Caco-2 (cell line): ENCODE measurements at regions of chr11 and their contacts with region 1.

Region 1: DNA sequence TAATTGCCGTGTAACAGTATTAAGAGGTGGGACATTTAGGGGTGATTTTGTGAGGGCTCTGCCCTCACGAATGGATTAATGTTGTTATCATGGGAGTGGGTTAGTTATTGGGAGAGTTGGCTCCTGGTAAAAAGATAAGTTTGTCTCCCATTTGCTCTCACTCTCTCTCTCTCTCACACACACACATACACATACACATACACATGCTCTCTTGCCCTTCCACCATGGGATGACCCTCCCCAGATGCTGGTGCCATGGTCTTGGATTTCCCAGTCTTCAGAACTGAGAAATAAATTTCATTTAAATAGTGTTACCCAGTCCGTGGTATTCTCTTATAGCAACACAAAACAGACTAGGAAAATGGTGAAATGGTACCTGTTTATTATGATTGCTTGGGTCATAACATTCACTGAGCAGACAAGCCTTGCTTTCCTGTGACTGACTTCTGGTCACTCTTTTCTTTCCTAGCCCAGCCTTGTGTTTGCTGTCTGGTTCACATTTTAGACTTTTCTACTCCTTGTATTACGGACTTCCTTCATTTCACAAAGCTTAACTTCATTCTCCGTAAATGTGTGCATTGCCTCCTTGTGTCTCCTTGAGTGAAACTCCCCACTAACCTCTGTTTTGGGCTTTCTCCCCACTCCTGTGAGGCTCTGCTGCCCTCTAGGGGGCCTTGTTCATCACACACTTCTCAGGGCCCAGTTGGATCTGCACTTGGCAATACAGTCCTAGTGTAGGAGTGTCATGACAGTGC is 206.5 kb upstream of the CTSC start:
- DNase-seq: peak; percentile 83 to 91
- H3K4me3 ChIP-seq: no peak overlapping the region
- H3K4me3 Mint-ChIP-seq: no peak overlapping the region
- H3K27ac Mint-ChIP-seq: no peak overlapping the region
- H3K4me1 ChIP-seq: no peaks in the 10 kb centered on the region
- H3K4me1 Mint-ChIP-seq: peaks cover 7% of the 10 kb centered on the region
- H3K27me3 ChIP-seq: no peaks in the 10 kb centered on the region
- H3K27me3 Mint-ChIP-seq: peaks cover 14% of the 10 kb centered on the region
- CTCF ChIP-seq: peak; percentile 98 to 99

Region 2: DNA sequence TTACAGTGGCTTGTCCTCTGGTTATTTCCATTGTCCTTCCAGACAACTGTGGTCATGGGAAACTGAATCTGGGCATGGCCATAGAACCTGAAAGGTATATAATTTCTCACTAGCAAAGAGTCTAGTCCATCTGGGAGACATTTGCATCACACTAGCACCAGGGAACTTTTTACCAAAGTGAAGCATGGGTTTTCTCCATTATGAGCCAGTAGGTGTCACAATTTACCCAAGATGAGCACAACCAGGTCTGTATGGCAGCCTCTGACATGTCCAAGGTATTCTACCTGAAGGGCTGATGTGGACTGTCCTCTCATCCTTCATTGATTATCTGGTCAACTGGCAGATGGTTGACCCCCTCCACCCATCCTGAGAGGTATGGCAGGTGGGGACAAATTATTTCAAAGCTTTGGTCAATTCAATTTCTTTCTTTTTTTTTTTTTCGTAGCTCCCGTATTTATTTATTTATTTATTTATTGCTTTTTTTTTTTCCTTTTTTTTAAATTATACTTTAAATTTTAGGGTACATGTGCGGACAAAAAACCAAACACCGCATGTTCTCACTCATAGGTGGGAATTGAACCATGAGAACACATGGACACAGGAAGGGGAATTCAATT is 1080.5 kb before region 1 on chr11:
- CTCF ChIA-PET with region 1: no interaction called
- POLR2A ChIA-PET with region 1: no interaction called
- intact Hi-C with region 1: loop called (anchors 2 kb)
- DNase-seq: peak; percentile 66 to 72
- H3K4me3 ChIP-seq: no peak overlapping the region
- H3K4me3 Mint-ChIP-seq: no peak overlapping the region
- H3K27ac Mint-ChIP-seq: no peak overlapping the region
- H3K4me1 ChIP-seq: peaks cover 27% of the 10 kb centered on the region
- H3K4me1 Mint-ChIP-seq: no peaks in the 10 kb centered on the region
- H3K27me3 ChIP-seq: no peaks in the 10 kb centered on the region
- H3K27me3 Mint-ChIP-seq: no peaks in the 10 kb centered on the region
- CTCF ChIP-seq: peak; percentile 41 to 48

Region 3: DNA sequence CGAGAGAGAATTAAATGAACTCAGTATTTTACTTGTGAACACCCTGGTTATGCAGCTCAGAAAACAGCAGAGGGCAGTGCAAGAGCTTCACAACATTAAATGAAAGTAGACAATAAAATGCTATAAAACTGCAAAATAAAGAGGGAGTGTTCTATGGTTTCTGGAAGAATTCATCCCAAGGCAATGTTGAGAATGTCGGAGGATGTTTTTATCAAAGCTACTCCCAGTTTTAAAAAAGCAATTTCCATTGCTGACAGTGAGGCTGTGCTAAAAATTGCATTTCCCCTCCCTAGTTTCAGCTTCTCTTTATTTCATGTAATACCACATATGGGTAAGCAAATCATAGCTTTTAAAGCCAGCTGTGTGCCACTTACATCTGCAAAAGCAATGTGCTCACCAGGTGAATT is 665.7 kb before region 1 on chr11:
- CTCF ChIA-PET with region 1: no interaction called
- POLR2A ChIA-PET with region 1: no interaction called
- intact Hi-C with region 1: loop called (anchors 1 kb)
- DNase-seq: peak; percentile 32 to 45
- H3K4me3 ChIP-seq: no peak overlapping the region
- H3K4me3 Mint-ChIP-seq: no peak overlapping the region
- H3K27ac Mint-ChIP-seq: no peak overlapping the region
- H3K4me1 ChIP-seq: no peaks in the 10 kb centered on the region
- H3K4me1 Mint-ChIP-seq: no peaks in the 10 kb centered on the region
- H3K27me3 ChIP-seq: no peaks in the 10 kb centered on the region
- H3K27me3 Mint-ChIP-seq: no peaks in the 10 kb centered on the region
- CTCF ChIP-seq: peak; percentile 78 to 82

Region 4: DNA sequence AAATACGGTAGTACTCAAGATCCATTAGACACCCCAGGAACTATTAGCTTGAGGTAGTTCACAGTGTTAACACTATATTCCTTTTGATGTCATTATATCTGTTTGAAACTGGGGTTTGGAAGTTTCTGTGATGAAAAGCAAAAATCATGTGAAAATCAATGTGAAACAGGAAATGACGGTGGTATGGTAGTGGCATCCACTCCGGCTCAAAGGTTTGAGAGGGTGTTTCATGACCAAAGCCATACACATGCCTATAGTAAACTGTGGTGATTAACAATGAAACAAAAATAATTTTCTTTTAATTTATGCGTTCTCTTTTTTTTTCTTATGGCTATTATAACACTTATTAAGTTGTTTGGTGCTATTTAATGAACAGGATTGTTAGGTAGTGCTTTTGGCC is 379.8 kb before region 1 on chr11:
- CTCF ChIA-PET with region 1: no interaction called
- POLR2A ChIA-PET with region 1: no interaction called
- intact Hi-C with region 1: loop called (anchors 2 kb)
- DNase-seq: no peak
- H3K4me3 ChIP-seq: no peak overlapping the region
- H3K4me3 Mint-ChIP-seq: no peak overlapping the region
- H3K27ac Mint-ChIP-seq: no peak overlapping the region
- H3K4me1 ChIP-seq: no peaks in the 10 kb centered on the region
- H3K4me1 Mint-ChIP-seq: no peaks in the 10 kb centered on the region
- H3K27me3 ChIP-seq: peaks cover 1% of the 10 kb centered on the region; the same call in 1 of the 2 replicates
- H3K27me3 Mint-ChIP-seq: peaks cover 12% of the 10 kb centered on the region
- CTCF ChIP-seq: no peak

Region 5: GRCh38 chr11:88281317-88281712 is 262.8 kb before region 1 on chr11:
- CTCF ChIA-PET with region 1: no interaction called
- POLR2A ChIA-PET with region 1: no interaction called
- intact Hi-C with region 1: loop called (anchors 1 kb)
- DNase-seq: peak in 1 of 2 experiments; percentile 25
- H3K4me3 ChIP-seq: no peak overlapping the region
- H3K4me3 Mint-ChIP-seq: no peak overlapping the region
- H3K27ac Mint-ChIP-seq: no peak overlapping the region
- H3K4me1 ChIP-seq: no peaks in the 10 kb centered on the region
- H3K4me1 Mint-ChIP-seq: no peaks in the 10 kb centered on the region
- H3K27me3 ChIP-seq: no peaks in the 10 kb centered on the region
- H3K27me3 Mint-ChIP-seq: no peaks in the 10 kb centered on the region
- CTCF ChIP-seq: peak; percentile 21 to 33

Region 6: GRCh38 chr11:88402192-88402715 is 141.8 kb before region 1 on chr11:
- CTCF ChIA-PET with region 1: no interaction called
- POLR2A ChIA-PET with region 1: no interaction called
- intact Hi-C with region 1: loop called (anchors 1 kb)
- DNase-seq: peak in 1 of 2 experiments; percentile 48
- H3K4me3 ChIP-seq: no peak overlapping the region
- H3K4me3 Mint-ChIP-seq: peak overlapping the region; percentile 13
- H3K27ac Mint-ChIP-seq: peak overlapping the region; percentile 7
- H3K4me1 ChIP-seq: peaks cover 4% of the 10 kb centered on the region; the same call in 1 of the 2 replicates
- H3K4me1 Mint-ChIP-seq: peaks cover 34% of the 10 kb centered on the region
- H3K27me3 ChIP-seq: no peaks in the 10 kb centered on the region
- H3K27me3 Mint-ChIP-seq: no peaks in the 10 kb centered on the region
- CTCF ChIP-seq: no peak